Posterior vena cava (tissue), 2 donors: ENCODE measurements at regions of chr4 and their contacts with region 1.

Region 1: GRCh38 chr4:87758270-87758669 is 41.1 kb upstream of the IBSP start:
- DNase-seq: no peak

Region 2: DNA sequence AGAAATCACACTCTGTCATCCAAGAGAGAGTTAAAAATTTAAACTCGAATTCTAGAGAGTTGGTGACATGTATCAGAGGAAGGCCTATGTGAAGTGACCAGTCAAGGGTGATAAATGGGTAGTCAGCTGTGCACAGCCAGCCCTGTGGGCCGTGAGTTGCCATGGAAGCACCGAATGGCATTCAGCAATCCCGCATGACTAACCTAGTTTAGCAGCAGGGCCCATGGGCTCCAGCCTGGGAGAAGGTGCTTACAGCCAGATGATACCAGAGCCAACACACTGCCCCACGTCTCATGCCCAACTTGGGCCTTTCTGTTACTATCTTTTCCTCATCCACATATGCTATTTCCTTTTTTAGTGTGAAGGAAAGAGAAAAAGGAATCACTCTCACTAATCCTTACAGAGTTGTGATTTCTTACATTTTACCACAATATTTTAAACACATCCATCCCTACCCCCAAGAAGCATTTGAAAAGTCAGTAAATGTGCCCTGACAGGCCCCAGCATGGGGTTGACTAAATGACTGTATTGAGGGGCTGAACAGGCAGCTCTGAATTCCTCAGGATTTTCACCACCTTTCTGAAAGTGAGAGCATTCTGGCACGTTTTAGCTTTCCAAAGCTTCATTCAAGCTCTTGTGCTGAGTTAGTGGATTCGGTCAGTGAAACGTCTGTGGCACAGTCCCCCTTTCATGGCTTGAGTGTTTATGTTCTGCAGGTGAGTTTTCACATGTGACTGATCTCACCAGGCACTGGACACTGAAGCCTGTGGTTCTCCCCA is 719.2 kb before region 1 on chr4:
- intact Hi-C with region 1: no loop called
- DNase-seq: no peak

Region 3: DNA sequence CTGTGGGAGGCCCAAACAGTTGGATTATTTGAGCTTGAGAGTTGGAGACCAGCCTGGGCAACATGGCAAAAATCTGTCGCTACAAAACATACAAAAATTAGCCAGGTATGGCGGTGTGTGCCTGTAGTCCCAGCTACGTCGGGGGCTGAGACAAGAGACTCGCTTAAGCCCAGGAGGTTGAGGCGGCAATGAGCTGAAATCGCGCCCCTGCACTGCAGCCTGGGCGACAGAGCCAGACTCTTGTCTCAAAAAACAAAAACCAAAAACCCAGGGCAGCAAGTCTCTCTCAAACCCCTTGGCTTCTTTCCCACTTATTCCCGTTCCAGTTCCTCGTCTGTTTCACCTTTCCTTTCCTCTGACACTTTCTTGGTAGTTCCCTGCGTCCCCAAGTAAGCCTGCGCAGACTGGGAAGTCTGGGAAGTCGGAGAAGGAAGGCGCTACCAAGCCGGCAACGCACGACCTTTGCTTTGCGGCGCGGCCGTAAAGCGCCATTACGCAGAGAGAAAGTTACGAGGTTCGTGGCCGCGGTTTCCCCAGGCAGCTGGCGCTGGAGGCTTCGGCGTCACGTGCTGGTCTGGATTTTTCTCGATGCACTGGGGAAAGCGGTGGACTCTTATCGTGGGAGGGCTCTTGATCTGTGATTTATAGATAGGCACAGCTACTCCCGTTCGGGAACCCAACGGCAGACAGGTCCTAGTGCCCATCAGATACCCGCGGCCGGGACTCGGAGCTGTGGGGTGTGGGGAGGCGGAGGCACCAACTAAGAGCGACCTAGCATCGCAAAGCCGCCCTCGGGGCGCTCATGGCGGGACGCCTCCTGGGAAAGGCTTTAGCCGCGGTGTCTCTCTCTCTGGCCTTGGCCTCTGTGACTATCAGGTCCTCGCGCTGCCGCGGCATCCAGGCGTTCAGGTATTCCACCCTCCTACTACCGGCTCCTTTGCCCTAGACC is 335.9 kb before region 1 on chr4 and contains the start of gene NUDT9:
- intact Hi-C with region 1: no loop called
- DNase-seq: peak; percentile 99
- total RNA-seq, gene NUDT9: 18.9 to 21.8 TPM

Region 4: DNA sequence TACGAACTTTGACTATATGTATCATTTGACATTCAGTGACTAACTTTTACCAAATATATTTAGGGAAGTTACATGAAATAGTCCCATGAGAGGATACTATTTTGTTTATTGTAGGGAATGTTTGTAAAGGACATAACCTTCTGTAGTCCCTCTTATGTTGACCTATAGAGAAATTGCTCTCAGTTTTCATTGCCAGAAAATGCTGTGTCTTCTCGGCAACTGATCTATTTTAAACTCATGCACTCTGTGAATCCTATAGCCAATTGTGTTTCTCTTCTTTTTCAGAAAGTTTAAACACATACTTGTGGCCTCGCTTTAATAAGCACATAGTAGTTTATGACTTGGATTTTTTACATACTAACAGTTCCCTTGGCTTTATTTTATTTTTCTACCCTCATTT is 70.0 kb before region 1 on chr4:
- intact Hi-C with region 1: loop called in 1 of 2 experiments (anchors 2 kb)
- DNase-seq: no peak